Dendritic cell treated with granulocyte-macrophage colony-stimulating factor and Interleukin-4, amounts not matched to agents 40 ng/mL and 50 ng/mL, for 4 days (primary cell): ENCODE measurements at regions of chr7 and their contacts with region 1.

Region 1: DNA sequence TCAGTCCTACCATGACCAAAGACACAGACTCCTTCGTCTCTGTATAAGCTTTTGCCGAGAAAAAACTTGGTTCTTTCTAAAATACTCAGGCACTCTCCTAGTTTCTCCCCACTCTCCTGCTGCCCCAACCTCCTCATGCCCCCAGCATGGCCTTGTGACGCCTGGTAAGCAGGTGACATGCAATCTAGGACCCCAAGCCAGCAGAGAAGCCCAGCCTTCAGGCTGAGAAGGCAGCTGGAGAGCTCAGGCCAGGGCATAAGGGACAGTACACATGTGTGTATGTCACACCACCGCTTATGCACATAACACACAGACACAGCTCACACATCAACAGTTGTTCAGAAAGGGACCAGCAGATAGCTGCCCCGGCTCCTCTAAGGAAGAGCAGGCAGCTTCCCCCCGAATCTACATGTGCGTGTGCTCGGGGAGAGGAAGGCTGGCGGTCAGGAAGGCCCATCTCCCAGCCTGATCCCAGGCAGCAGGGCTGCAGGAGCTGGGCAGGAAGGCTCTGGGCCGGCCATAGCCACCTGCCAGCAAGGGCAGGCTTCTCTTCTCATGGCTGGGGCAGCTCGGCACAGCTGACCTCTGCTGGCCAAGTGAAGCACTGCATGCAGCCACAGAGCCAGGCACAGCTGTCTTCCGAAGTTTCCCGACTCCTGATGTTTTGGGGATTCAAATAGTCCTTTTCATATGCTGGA is 8.5 kb downstream of the DDX56 start:
- H3K4me3 Mint-ChIP-seq: no peak overlapping the region
- H3K27ac Mint-ChIP-seq: no peak overlapping the region
- H3K4me1 Mint-ChIP-seq: peaks cover 30% of the 10 kb centered on the region
- H3K27me3 Mint-ChIP-seq: no peaks in the 10 kb centered on the region

Region 2: DNA sequence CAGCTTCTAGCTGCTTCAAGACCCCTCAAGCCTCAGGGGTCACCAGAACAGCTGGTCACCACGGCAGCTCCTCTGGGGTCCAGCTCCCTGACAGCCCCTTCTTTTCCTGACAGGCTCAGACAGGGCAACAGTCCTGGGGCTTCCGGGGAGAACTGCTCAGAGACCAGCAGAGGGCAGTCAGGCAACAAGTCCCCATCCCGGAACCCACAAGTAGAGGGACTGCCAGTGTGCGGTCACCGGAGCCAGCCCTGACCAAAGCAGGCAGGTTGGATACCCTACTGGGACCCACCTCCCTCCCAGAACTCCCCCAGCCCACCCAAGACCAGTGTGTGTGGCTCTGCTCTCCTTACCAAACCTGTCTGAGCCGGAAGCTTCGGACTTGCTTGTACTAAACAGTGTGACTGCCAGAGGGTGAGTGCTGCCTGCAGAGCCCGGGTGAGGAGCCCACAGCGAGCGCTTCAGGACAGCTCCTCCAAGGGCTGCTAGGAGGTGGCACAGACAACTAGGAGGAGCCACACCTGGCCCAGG is 324.2 kb before region 1 on chr7:
- intact Hi-C with region 1: loop called (anchors 1 kb)
- H3K4me3 Mint-ChIP-seq: peak overlapping the region; percentile 11
- H3K27ac Mint-ChIP-seq: peak overlapping the region; percentile 13
- H3K4me1 Mint-ChIP-seq: peaks cover 21% of the 10 kb centered on the region
- H3K27me3 Mint-ChIP-seq: peaks cover 8% of the 10 kb centered on the region

Region 3: DNA sequence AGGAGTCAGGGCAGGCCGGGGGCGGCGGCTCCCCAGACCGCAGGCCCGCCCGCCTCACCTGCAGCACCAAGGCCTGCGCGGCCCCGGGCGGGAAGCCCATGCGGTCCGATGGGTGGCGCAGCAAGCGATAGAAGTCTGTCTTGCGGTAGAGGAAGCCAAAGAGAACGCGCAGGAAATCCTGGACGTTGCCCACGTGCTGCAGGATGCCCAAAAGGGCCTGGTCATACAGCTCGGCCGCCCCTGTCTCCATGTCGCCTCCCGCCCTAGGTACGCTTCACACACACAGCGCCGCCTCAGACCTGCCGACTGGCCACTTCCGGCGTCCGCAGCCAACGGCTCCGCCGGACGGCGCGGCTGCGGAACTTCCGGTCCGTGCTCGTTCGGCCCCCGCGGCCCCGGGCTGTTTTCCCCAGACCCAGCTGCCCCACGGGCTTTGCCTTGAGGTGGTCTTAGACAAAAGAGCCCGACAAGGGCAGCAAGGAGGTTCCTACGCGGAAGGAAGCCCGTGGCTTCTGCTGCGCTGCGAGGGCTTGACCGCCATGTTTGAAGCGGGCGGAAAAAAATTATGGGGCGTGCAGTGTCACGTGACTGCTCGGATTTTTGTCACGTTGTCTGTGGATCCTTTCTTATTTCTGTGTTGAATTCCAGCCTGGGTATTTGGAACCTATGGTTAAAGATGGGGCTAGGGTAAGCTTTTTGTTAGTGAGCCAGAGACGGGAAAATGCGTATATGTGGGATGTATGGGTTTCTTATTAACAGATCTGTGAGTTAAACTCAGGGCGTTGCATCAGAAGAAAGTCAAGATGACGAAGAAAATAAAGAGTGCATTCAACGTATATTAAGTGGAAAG is 74.7 kb before region 1 on chr7 and contains the start of gene NUDCD3:
- intact Hi-C with region 1: loop called (anchors 5 kb)
- H3K4me3 Mint-ChIP-seq: peak within 1 kb of the TSS; percentile 95
- H3K27ac Mint-ChIP-seq: peak within 1 kb of the TSS; percentile 90
- H3K4me1 Mint-ChIP-seq: peaks cover 48% of the 10 kb centered on the region
- H3K27me3 Mint-ChIP-seq: peaks cover 4% of the 10 kb centered on the region